ENCODE measurements at regions of chr12 and their contacts with region 1.

Region 1: GRCh38 chr12:30754709-30755394 is at the start of gene CAPRIN2:
- H3K4me3 ChIP-seq: peak within 1 kb of the TSS; percentile 83
- H3K27ac ChIP-seq: peak within 1 kb of the TSS; percentile 74
- H3K4me1 ChIP-seq: 0 out of 2 replicates have a peak, but pooled peaks cover 4% of the 10 kb centered on the region
- CTCF ChIP-seq: peak; percentile 91

Region 2: GRCh38 chr12:30695199-30696103 is 59.4 kb before region 1 on chr12 and contains the start of gene IPO8:
- CTCF ChIA-PET with region 1: interaction called, 6 read pairs
- POLR2A ChIA-PET with region 1: interaction called, 23 read pairs
- H3K4me3 ChIP-seq: peak within 1 kb of the TSS; percentile 98
- H3K27ac ChIP-seq: peak within 1 kb of the TSS; percentile 80
- H3K4me1 ChIP-seq: peaks cover 2% of the 10 kb centered on the region; the same call in 1 of the 2 replicates
- CTCF ChIP-seq: peak; percentile 84

Region 3: GRCh38 chr12:30795410-30796312 is 40.8 kb after region 1 on chr12:
- CTCF ChIA-PET with region 1: no interaction called
- POLR2A ChIA-PET with region 1: interaction called, 33 read pairs
- H3K4me3 ChIP-seq: peak overlapping the region; percentile 58
- H3K27ac ChIP-seq: peak overlapping the region; percentile 83
- H3K4me1 ChIP-seq: peaks cover 4% of the 10 kb centered on the region; the same call in 1 of the 2 replicates
- CTCF ChIP-seq: peak; percentile 45

Region 4: GRCh38 chr12:30806989-30807694 is 52.3 kb after region 1 on chr12:
- CTCF ChIA-PET with region 1: interaction called, 24 read pairs
- POLR2A ChIA-PET with region 1: no interaction called
- H3K4me3 ChIP-seq: no peak overlapping the region
- H3K27ac ChIP-seq: no peak overlapping the region
- H3K4me1 ChIP-seq: no peaks in the 10 kb centered on the region
- CTCF ChIP-seq: peak; percentile 77